ENCODE measurements at regions of chr10 and their contacts with region 1.

Region 1: GRCh38 chr10:86399879-86400704 is 33.5 kb upstream of the GRID1 start:
- DNase-seq: peak; percentile 96
- ATAC-seq: peak; percentile 96

Region 2: GRCh38 chr10:86585037-86585725 is 185.1 kb after region 1 on chr10:
- intact Hi-C with region 1: loop called (anchors 1 kb)
- DNase-seq: peak; percentile 75
- ATAC-seq: peak; percentile 93

Region 3: DNA sequence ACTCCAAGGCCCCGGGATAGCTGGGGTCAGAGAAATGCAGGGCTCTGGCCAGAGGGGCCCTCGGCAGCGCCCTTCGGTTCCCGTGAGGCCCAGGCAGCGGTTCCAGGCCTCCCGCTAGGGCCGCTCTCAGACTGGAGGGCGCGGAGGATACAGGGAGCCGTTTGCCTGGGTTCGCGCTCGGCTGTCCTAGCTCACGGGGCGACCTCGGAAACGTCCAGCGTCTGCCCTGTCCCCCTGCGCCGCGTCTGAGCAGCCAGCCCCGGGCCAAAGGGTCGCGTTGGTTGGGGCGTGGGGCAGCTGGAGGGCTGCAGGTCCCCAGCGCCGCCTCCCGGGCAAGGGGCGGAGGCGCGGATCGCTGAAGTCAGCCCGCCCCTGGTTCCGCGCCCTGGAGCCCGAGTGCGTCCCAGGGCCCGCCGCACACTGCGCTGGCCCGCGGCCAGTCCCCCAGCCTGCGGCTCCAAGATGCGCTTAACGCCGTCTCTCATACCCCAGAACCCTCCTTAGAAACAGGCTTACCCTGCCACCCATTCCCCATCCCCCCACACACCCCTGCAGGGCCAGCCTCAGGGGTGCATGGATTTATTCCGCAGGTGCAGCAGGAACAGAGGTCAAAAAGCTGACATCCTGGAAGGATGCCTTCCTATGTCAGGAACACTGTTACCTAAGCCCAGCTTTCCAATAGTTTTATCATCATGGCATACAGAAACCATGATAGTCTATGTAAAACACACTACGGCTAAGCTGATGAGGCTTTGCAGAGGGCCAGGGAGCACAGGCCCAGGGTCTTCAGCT is 232.1 kb after region 1 on chr10:
- intact Hi-C with region 1: loop called (anchors 5 kb)
- DNase-seq: peak; percentile 73
- ATAC-seq: peak; percentile 82